ENCODE measurements at regions of chr16 and their contacts with region 1.

Region 1: GRCh38 chr16:30491744-30492308 is 19.3 kb downstream of the ITGAL start:
- DNase-seq: peak; percentile 52
- H3K4me3 Mint-ChIP-seq: no peak overlapping the region
- H3K27ac Mint-ChIP-seq: peak overlapping the region; percentile 71
- H3K4me1 Mint-ChIP-seq: peaks cover 25% of the 10 kb centered on the region
- H3K27me3 Mint-ChIP-seq: no peaks in the 10 kb centered on the region

Region 2: GRCh38 chr16:30526823-30527635 is 35.2 kb after region 1 on chr16:
- CTCF ChIA-PET with region 1: no interaction called
- POLR2A ChIA-PET with region 1: no interaction called
- intact Hi-C with region 1: loop called (anchors 5 kb)
- DNase-seq: peak; percentile 98
- H3K4me3 Mint-ChIP-seq: peak overlapping the region; percentile 73
- H3K27ac Mint-ChIP-seq: peak overlapping the region; percentile 86
- H3K4me1 Mint-ChIP-seq: peaks cover 38% of the 10 kb centered on the region
- H3K27me3 Mint-ChIP-seq: no peaks in the 10 kb centered on the region